ENCODE measurements at regions of chrX and their contacts with region 1.

Region 1: DNA sequence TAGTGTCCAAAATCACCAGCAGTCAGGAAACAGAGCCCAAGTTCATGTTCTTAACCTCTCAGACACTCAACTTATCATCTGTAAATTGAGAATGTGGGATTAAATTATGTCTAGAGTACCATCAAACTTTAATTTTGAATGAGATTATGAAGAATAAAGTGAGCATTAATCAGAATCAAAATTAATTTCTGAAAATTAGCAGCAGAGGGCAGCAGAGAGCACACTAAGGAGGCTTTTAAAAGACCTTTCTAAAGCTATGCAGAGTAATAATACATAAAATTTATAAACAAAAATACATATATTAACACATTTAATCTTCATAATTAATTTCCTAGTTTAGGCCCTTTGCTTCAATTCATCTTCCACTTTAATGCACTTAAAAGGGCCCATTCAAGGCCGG is 7.1 kb downstream of the TASL start:
- DNase-seq: no peak
- ATAC-seq: no peak
- H3K4me3 Mint-ChIP-seq: no peak overlapping the region
- H3K27ac Mint-ChIP-seq: no peak overlapping the region
- H3K4me1 Mint-ChIP-seq: peaks cover 18% of the 10 kb centered on the region
- H3K27me3 Mint-ChIP-seq: no peaks in the 10 kb centered on the region

Region 2: DNA sequence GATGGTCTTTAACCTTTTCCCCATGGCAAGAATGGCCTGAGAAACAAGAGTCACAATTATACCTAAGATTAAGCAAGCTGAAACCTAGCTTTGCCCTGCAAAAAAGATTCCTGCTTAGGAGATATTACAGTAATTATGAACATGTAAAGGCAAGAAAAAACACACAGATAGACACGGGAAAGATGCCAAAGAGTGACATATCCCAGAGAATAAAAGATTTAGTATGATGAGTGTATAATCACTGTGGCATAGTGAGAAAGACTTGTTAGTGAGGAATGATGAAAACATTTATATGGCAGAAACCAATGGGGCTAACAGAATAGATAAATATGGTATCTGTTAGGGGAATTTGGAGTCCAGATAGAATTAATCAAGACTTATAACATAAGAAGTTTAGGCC is 36.6 kb after region 1 on chrX:
- CTCF ChIA-PET with region 1: interaction called, 3 read pairs
- POLR2A ChIA-PET with region 1: no interaction called
- intact Hi-C with region 1: loop called in 1 of 2 experiments (anchors 1 kb)
- DNase-seq: no peak
- ATAC-seq: no peak
- H3K4me3 Mint-ChIP-seq: no peak overlapping the region
- H3K27ac Mint-ChIP-seq: no peak overlapping the region
- H3K4me1 Mint-ChIP-seq: peaks cover 5% of the 10 kb centered on the region
- H3K27me3 Mint-ChIP-seq: no peaks in the 10 kb centered on the region

Region 3: GRCh38 chrX:30652527-30653414 is 82.3 kb after region 1 on chrX:
- CTCF ChIA-PET with region 1: no interaction called
- POLR2A ChIA-PET with region 1: no interaction called
- intact Hi-C with region 1: loop called in 1 of 2 experiments (anchors 10 kb)
- DNase-seq: peak; percentile 95
- ATAC-seq: peak; percentile 67
- H3K4me3 Mint-ChIP-seq: peak overlapping the region; percentile 86
- H3K27ac Mint-ChIP-seq: peak overlapping the region; percentile 98
- H3K4me1 Mint-ChIP-seq: peaks cover 36% of the 10 kb centered on the region
- H3K27me3 Mint-ChIP-seq: no peaks in the 10 kb centered on the region